ENCODE measurements at regions of chr1 and their contacts with region 1.

Region 1: GRCh38 chr1:147627435-147628110 is 42.8 kb downstream of the ACP6 start:
- DNase-seq: peak in 2 of 3 donors; percentile 51 to 58
- ATAC-seq: peak; percentile 86
- H3K4me3 ChIP-seq: no peak overlapping the region
- H3K4me1 ChIP-seq: no peaks in the 10 kb centered on the region
- CTCF ChIP-seq: peak; percentile 85

Region 2: GRCh38 chr1:147515046-147515869 is 112.3 kb before region 1 on chr1:
- intact Hi-C with region 1: loop called in 1 of 2 experiments (anchors 10 kb)
- DNase-seq: peak in 1 of 3 donors; percentile 54
- ATAC-seq: peak; percentile 98
- H3K4me3 ChIP-seq: no peak overlapping the region
- H3K4me1 ChIP-seq: no peaks in the 10 kb centered on the region
- CTCF ChIP-seq: no peak